Psoas muscle (tissue), 8 donors: ENCODE measurements at regions of chr7 and their contacts with region 1.

Region 1: DNA sequence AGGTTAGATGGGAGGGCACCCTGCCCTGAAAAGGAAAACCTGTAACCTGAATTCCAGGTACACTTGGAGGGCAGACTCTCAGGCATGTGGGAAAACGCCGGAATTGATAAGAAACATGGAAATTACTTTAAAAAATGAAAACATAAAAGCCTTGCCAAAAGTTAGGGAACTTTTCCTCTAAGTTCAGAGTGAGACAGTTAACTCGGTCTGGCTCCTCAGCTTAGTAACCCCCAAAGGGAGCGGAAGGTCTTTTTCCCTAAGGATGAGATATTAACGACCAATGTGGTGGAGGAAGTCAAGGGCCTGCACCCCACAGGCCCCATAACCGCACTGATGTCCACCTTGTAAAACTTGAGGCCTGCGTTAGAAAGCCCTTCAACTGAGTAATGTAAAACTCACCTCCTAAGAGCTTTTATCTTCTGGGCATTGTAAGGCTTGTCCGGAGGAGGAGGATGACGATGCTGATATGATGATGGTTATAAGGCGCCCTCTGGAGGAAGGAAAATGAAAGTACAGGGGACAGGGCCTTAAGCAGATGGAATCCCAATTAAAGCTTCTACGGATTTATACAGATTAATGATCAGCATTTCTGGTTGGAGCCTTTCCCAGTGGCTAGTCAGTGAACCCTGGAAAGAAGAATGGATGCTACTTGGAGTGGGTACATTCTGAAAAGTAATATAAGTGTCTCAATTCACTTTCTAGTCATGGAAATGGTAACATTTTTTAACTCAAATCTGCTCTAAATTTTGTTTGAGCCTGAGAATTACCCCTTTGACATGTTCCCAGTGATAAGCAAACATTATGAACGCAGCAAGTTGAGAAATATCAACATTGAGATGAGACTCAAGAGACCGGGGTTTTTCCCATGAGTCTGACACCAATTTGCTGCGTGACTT is 694 bp downstream of the COL1A2 start:
- DNase-seq: no peak
- ATAC-seq: peak; percentile 61 to 84 (median 76)
- H3K4me3 ChIP-seq: peak overlapping the region; percentile 56
- H3K27ac ChIP-seq: peak overlapping the region; percentile 64
- H3K4me1 ChIP-seq: no peaks in the 10 kb centered on the region
- H3K27me3 ChIP-seq: peaks cover 0 to 10% (median 8%) of the 10 kb centered on the region in 3 donors
- CTCF ChIP-seq: peak; percentile 62

Region 2: DNA sequence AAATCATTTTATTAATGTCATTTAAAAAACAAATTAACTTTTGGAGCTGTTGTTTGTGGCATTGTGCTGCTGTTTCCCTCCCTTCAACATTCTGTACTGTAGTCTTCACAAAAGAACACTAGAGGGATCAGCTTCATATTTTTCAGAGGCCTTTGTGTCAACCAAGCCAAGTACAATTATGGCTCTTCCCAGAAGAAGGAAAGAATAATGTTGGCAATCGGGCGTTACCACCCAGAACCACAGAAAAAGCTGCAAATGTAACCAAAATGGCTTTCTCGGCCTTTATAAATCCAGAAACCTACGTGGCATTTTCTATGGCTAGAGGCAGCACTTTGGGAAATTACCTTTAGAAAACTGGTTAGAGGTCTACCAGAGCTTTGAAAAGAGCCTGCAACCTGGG is 99.5 kb before region 1 on chr7:
- intact Hi-C with region 1: loop called (anchors 5 to 10 kb)
- DNase-seq: no peak
- ATAC-seq: peak in 2 of 4 donors; percentile 50 to 72
- H3K4me3 ChIP-seq: no peak overlapping the region
- H3K27ac ChIP-seq: peak overlapping the region; percentile 41
- H3K4me1 ChIP-seq: no peaks in the 10 kb centered on the region
- H3K27me3 ChIP-seq: no peaks in the 10 kb centered on the region
- CTCF ChIP-seq: peak; percentile 26